T-cell (primary cell): ENCODE measurements at regions of chr19 and their contacts with region 1.

Region 1: DNA sequence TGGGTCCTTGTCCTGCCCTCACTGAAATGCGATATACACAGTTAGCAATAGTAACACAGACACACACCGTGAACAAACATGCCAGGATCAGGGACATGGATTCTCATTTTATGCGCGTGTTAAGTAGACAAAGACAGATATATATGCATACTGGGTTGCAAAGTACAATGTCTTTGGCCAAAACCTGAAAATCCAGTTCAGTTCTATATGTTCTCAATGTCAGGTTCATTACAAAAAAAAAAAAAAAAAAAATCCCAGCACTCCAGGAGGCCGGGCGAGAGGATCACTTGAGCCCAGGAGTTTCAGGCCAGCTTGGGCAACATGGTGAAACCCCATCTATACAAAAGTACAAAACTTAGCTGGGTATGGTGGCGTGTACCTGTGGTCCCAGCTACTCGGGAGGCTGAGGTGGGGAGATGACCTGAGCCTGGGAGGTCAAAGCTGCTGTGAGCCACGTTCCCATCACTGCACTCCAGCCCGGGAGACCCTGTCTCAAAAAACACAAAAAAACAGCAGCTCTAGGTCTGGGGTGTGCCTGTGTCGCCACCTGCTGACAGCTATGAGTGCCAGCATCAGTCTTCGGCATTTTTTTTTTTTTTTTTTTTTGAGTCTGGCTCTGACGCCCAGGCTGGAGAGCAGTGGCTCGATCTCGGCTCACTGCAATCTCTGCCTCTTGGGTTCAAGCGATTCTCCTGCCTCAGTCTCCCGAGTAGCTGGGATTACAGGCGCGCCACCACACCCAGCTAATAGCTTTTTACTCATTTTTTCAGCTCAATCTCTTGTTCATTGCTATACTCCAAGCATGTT is 10.3 kb downstream of the AP2S1 start:
- DNase-seq: peak in 32 of 35 experiments; percentile 14 to 84 (median 44)
- ATAC-seq: peak; percentile 64 to 87 (median 72)
- H3K4me3 ChIP-seq: no peak overlapping the region
- H3K4me3 Mint-ChIP-seq: no peak overlapping the region
- H3K27ac ChIP-seq: no peak overlapping the region
- H3K27ac Mint-ChIP-seq: peak overlapping the region in 1 of 2 donors; percentile 23
- H3K4me1 ChIP-seq: peaks cover 0 to 7% of the 10 kb centered on the region in 2 experiments
- H3K4me1 Mint-ChIP-seq: peaks cover 0 to 6% (median 3%) of the 10 kb centered on the region in 3 donors
- H3K27me3 ChIP-seq: no peaks in the 10 kb centered on the region
- H3K27me3 Mint-ChIP-seq: no peaks in the 10 kb centered on the region

Region 2: GRCh38 chr19:46704379-46705076 is 135.8 kb before region 1 on chr19:
- CTCF ChIA-PET with region 1: interaction called, 3 to 12 read pairs
- POLR2A ChIA-PET with region 1: no interaction called
- DNase-seq: peak; percentile 52 to 92 (median 84)
- ATAC-seq: peak; percentile 87 to 93 (median 91)
- H3K4me3 ChIP-seq: no peak overlapping the region
- H3K4me3 Mint-ChIP-seq: no peak overlapping the region
- H3K27ac ChIP-seq: no peak overlapping the region
- H3K27ac Mint-ChIP-seq: peak overlapping the region; percentile 28 to 79
- H3K4me1 ChIP-seq: peaks cover 0 to 13% of the 10 kb centered on the region in 2 experiments
- H3K4me1 Mint-ChIP-seq: peaks cover 11 to 19% (median 15%) of the 10 kb centered on the region in 3 donors
- H3K27me3 ChIP-seq: no peaks in the 10 kb centered on the region
- H3K27me3 Mint-ChIP-seq: no peaks in the 10 kb centered on the region

Region 3: DNA sequence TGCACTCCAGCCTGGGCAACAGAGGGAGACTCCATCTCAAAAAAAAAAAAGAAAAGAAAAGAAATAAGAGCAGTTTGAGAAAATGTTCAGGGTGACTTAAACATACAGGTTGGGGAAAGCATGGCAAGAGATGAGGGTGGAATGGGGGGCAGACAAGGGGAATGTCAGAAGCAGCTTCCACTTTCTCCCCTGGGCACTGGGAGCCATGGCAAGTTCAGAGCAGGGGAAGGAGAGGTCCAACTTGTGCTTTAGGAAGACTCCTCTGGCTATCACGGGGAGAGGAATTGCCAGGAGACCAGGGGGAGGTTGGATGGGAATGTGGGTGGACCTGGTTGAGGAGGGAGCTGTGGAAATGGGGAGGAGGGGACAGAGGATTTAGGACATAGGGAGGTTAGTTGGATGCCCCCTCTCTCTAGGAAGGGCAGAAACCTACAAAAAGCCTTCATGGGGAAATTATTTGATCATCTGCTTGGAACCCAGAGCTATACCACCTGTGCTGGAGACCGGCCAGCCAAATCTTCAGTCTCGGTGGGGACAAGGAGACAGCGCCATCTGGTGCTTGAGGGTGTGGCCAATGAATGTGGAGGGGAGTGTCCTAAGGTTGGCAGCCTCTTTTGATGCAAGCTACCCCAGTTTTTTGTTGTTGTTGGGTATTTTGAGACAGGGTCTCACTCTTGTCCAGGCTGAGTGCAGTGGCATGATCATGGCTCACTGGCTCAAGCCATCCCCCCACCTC is 86.8 kb before region 1 on chr19:
- CTCF ChIA-PET with region 1: interaction called, 20 to 35 read pairs
- POLR2A ChIA-PET with region 1: interaction called in 1 of 2 experiments, 5 read pairs
- DNase-seq: peak; percentile 42 to 80 (median 67)
- ATAC-seq: peak; percentile 76 to 85 (median 78)
- H3K4me3 ChIP-seq: no peak overlapping the region
- H3K4me3 Mint-ChIP-seq: no peak overlapping the region
- H3K27ac ChIP-seq: no peak overlapping the region
- H3K27ac Mint-ChIP-seq: peak overlapping the region in 1 of 2 donors; percentile 19
- H3K4me1 ChIP-seq: peaks cover 0 to 21% of the 10 kb centered on the region in 2 experiments
- H3K4me1 Mint-ChIP-seq: peaks cover 11 to 15% (median 12%) of the 10 kb centered on the region in 3 donors
- H3K27me3 ChIP-seq: no peaks in the 10 kb centered on the region
- H3K27me3 Mint-ChIP-seq: no peaks in the 10 kb centered on the region

Region 4: GRCh38 chr19:46788262-46788967 is 51.9 kb before region 1 on chr19 and contains the start of gene SLC1A5:
- CTCF ChIA-PET with region 1: interaction called, 3 to 13 read pairs
- POLR2A ChIA-PET with region 1: interaction called in 1 of 2 experiments, 4 read pairs
- DNase-seq: peak; percentile 84 to 96 (median 91)
- ATAC-seq: peak; percentile 80 to 83 (median 82)
- H3K4me3 ChIP-seq: peak within 1 kb of the TSS; percentile 81 to 94
- H3K4me3 Mint-ChIP-seq: peak within 1 kb of the TSS; percentile 86 to 92 (median 88)
- H3K27ac ChIP-seq: peak within 1 kb of the TSS; percentile 52
- H3K27ac Mint-ChIP-seq: peak within 1 kb of the TSS; percentile 71 to 90
- H3K4me1 ChIP-seq: peaks cover 31 to 66% of the 10 kb centered on the region in 2 experiments
- H3K4me1 Mint-ChIP-seq: peaks cover 57 to 69% (median 67%) of the 10 kb centered on the region in 3 donors
- H3K27me3 ChIP-seq: peaks cover 0 to 2% of the 10 kb centered on the region in 2 experiments
- H3K27me3 Mint-ChIP-seq: no peaks in the 10 kb centered on the region
- total RNA-seq, gene SLC1A5: 7.6 to 50.5 (median 47.7) TPM

Region 5: GRCh38 chr19:46931202-46931601 is 90.9 kb after region 1 on chr19:
- CTCF ChIA-PET with region 1: no interaction called
- POLR2A ChIA-PET with region 1: interaction called in 1 of 2 experiments, 11 read pairs
- DNase-seq: no peak
- ATAC-seq: no peak
- H3K4me3 ChIP-seq: no peak overlapping the region
- H3K4me3 Mint-ChIP-seq: no peak overlapping the region
- H3K27ac ChIP-seq: peak overlapping the region; percentile 13
- H3K27ac Mint-ChIP-seq: peak overlapping the region; percentile 84 to 85
- H3K4me1 ChIP-seq: peaks cover 6 to 46% of the 10 kb centered on the region in 2 experiments
- H3K4me1 Mint-ChIP-seq: peaks cover 62 to 82% (median 73%) of the 10 kb centered on the region in 3 donors
- H3K27me3 ChIP-seq: no peaks in the 10 kb centered on the region
- H3K27me3 Mint-ChIP-seq: no peaks in the 10 kb centered on the region